Activated CD8-positive, alpha-beta T cell treated with anti-CD3 and anti-CD28 coated beads, Interleukin-2, amount 10 ng/mL, durations not matched to agents 7 days and 5 days (primary cell): ENCODE measurements at regions of chr19 and their contacts with region 1.

Region 1: DNA sequence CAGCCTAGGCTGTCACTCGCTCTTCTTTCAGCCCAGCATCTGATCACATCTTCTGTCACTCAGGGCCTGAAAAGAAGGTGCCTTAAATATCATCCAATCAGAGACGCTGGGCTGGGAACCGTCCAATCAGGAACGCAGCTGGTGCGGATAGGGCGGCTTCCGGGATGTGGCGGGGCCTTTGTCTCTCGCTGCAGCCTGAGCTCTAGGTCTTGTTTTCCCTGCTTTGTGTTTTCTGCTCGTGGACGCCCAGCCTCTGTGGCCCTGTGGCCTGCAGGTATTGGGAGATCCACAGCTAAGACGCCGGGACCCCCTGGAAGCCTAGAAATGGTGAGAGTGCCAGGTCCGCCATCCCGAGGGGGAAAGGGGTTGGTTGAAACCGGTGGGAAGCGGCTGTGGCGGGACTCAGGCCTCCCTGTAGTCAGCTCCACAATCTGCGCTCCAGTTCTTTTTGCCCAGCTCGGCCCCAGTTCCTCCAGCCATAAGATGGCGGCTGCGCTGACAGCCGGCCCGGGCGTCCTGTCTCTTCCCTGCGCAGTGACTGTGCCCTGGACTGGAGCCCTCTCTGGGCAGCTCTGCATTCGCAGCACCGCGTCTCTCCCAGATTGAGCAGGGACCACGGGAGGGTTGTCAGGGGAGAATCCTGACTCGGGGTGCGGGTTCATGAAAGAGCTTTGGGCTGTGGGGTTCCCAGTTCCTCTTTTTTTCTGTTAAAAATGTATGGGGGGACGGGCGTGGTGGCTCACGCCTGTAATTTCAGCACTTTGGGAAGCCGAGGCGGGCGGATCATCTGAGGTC is at the start of gene ZNF85:
- DNase-seq: peak; percentile 96
- ATAC-seq: peak; percentile 100
- H3K4me3 Mint-ChIP-seq: peak within 1 kb of the TSS; percentile 98
- H3K27ac Mint-ChIP-seq: peak within 1 kb of the TSS; percentile 99
- H3K4me1 Mint-ChIP-seq: peaks cover 32% of the 10 kb centered on the region
- H3K27me3 Mint-ChIP-seq: no peaks in the 10 kb centered on the region
- total RNA-seq, gene ZNF85: 24.6 to 24.7 TPM

Region 2: DNA sequence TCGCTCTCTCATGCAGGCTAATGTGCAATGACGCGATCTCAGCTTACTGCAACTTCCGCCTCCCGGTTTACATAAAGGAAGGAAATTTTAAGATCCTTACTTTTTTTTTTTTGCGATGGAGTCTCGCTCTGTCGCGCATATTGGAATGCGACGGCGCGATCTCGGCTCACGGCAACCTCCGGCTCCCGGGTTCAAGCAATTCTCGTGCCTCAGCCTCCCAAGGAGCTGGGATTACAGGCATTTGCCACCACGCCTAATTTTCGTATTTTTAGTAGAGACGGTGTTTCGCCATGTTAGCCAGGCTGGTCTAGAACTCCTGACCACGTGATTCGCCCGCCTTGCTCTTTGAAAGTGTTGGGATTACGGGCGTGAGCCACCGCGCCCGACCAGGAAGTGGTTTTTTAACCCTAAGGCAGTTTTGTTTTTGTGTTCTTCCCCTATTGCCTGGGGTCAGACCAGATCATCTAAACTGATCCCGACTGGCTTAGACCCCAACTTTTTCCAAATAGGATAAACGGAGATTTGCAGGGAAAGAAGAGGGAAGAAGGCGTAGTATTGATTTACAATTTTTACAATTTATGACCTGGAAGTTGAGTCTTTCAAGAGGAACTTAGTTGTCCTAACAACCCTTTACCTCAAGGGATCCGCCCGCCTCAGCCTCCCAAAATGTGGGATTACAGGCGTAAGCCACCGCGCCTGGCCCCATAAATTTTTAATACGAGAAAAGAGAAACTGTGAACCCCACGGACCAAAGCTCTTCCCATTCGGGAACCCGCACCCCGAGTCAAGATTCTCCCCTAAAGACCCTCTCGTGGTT is 499.7 kb before region 1 on chr19:
- CTCF ChIA-PET with region 1: no interaction called
- POLR2A ChIA-PET with region 1: interaction called, 13 read pairs
- DNase-seq: peak; percentile 54
- ATAC-seq: no peak
- H3K4me3 Mint-ChIP-seq: peak overlapping the region; percentile 96
- H3K27ac Mint-ChIP-seq: peak overlapping the region; percentile 98
- H3K4me1 Mint-ChIP-seq: peaks cover 15% of the 10 kb centered on the region
- H3K27me3 Mint-ChIP-seq: no peaks in the 10 kb centered on the region

Region 3: DNA sequence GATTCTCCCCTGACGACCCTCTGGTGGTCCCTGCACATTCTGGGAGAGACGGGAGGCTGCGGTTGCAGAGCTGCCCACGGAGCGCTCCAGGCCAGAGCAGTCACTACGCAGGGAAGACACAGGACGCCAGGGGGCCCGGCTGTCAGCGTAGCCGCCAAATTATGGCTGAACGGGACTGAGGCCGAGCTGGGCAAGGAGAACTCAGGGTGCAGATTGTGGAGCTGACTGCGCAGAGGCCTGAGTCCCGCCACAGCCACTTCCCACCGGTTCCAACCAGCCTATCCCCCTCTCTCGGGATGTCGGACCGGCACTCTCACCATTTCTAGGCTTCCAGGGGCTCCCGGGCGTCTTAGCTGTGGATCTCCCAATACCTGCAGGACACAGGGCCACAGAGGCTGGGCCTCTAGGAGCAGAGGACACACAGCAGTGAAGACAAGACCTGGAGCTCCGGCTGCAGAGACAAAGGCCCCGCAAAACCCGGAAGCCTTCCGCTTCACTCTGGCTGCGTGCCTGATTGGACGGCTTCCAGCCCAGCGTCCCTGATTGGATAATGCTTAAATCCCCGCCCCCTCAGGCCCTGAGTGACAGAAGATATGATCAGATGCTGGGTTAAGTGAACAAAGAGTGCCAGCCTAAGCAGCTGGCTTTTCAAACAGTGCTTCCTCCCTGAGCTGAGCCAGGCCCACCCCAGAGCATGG is 357.8 kb before region 1 on chr19 and contains the start of gene ZNF737:
- CTCF ChIA-PET with region 1: no interaction called
- POLR2A ChIA-PET with region 1: interaction called, 15 read pairs
- DNase-seq: peak; percentile 96
- ATAC-seq: peak; percentile 99
- H3K4me3 Mint-ChIP-seq: peak within 1 kb of the TSS; percentile 99
- H3K27ac Mint-ChIP-seq: peak within 1 kb of the TSS; percentile 99
- H3K4me1 Mint-ChIP-seq: peaks cover 7% of the 10 kb centered on the region
- H3K27me3 Mint-ChIP-seq: no peaks in the 10 kb centered on the region
- total RNA-seq, gene ZNF737: 18.4 to 19.1 TPM

Region 4: DNA sequence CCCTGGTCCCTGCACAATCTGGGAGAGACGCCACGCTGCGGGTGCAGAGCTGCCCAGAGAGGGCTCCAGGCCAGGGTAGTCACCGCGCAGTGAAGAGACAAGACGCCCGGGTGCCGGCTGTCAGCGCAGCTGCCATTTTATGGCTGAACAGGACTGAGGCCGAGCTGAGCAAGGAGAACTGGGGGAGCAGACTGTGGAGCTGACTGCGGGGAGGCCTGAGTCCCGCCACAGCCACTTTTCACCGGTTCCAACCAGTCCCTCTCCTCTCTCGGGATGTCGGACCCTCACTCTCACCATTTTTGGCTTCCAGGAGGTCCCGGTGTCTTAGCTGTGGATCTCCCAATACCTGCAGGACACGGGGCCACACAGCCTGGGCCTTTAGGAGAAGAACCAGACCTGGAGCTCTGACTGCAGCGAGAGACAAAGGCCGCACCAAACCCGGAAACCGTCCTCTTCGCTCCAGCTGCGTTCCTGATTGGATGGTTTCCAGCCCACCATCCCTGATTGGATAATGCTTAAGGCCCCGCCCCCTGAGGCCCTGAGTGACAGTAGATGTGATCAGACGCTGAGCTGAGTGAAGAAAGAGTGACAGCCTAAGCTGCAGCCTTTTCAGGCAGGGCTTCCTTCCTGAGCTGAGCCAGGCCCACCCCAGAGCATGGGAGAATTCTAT is 262.0 kb before region 1 on chr19 and contains the start of gene ZNF626:
- CTCF ChIA-PET with region 1: no interaction called
- POLR2A ChIA-PET with region 1: interaction called, 13 read pairs
- DNase-seq: peak; percentile 95
- ATAC-seq: peak; percentile 99
- H3K4me3 Mint-ChIP-seq: peak within 1 kb of the TSS; percentile 91
- H3K27ac Mint-ChIP-seq: peak within 1 kb of the TSS; percentile 93
- H3K4me1 Mint-ChIP-seq: peaks cover 18% of the 10 kb centered on the region
- H3K27me3 Mint-ChIP-seq: no peaks in the 10 kb centered on the region
- total RNA-seq, gene ZNF626: 7.0 to 9.1 TPM

Region 5: GRCh38 chr19:20912973-20913372 is 10.3 kb before region 1 on chr19:
- CTCF ChIA-PET with region 1: no interaction called
- POLR2A ChIA-PET with region 1: no interaction called
- DNase-seq: no peak
- ATAC-seq: no peak
- H3K4me3 Mint-ChIP-seq: no peak overlapping the region
- H3K27ac Mint-ChIP-seq: no peak overlapping the region
- H3K4me1 Mint-ChIP-seq: no peaks in the 10 kb centered on the region
- H3K27me3 Mint-ChIP-seq: no peaks in the 10 kb centered on the region

Region 6: DNA sequence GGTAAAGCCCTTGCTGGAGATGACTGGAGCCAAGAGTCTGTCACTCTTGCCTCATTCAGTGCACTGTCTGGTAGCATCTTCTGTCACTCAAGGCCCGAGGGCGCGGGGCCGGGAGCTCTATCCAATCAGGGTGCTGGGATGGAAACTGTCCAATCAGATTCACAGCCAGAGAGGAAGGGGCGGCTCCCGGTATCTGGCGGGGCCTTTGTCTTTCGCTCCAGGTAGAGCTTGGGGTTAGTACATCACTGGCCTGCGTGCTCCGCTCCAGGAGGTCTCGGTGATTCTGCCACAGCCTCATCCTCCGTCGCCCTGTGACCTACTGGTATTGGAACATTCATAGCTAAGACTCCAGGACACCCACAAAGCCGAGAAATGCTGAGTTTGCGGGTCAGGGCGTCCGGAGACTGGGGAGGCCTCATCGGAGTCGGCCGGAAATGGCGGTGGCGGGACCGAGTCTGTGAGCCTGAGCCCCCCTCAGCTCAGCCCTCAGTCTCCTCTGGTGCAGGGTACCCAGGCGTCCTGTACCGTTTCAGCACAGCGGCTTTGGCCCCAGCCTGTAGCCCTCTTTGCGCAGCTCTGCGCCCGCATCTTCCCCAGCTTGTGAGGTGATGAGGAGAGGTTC is 76.6 kb after region 1 on chr19:
- CTCF ChIA-PET with region 1: no interaction called
- POLR2A ChIA-PET with region 1: interaction called, 24 read pairs
- DNase-seq: peak; percentile 94
- ATAC-seq: peak; percentile 100
- H3K4me3 Mint-ChIP-seq: peak overlapping the region; percentile 95
- H3K27ac Mint-ChIP-seq: peak overlapping the region; percentile 96
- H3K4me1 Mint-ChIP-seq: peaks cover 27% of the 10 kb centered on the region
- H3K27me3 Mint-ChIP-seq: no peaks in the 10 kb centered on the region

Region 7: GRCh38 chr19:21020298-21021227 is 97.3 kb after region 1 on chr19 and contains the start of gene ZNF430:
- CTCF ChIA-PET with region 1: interaction called, 5 read pairs
- POLR2A ChIA-PET with region 1: interaction called, 18 read pairs
- DNase-seq: peak; percentile 98
- ATAC-seq: peak; percentile 96
- H3K4me3 Mint-ChIP-seq: peak within 1 kb of the TSS; percentile 99
- H3K27ac Mint-ChIP-seq: peak within 1 kb of the TSS; percentile 99
- H3K4me1 Mint-ChIP-seq: peaks cover 35% of the 10 kb centered on the region
- H3K27me3 Mint-ChIP-seq: no peaks in the 10 kb centered on the region
- total RNA-seq, gene ZNF430: 22.0 to 25.5 TPM

Region 8: GRCh38 chr19:21141787-21142464 is 218.7 kb after region 1 on chr19 and contains the start of gene ZNF431:
- CTCF ChIA-PET with region 1: no interaction called
- POLR2A ChIA-PET with region 1: interaction called, 11 read pairs
- DNase-seq: peak; percentile 95
- ATAC-seq: peak; percentile 99
- H3K4me3 Mint-ChIP-seq: peak within 1 kb of the TSS; percentile 98
- H3K27ac Mint-ChIP-seq: peak within 1 kb of the TSS; percentile 97
- H3K4me1 Mint-ChIP-seq: peaks cover 24% of the 10 kb centered on the region
- H3K27me3 Mint-ChIP-seq: no peaks in the 10 kb centered on the region
- total RNA-seq, gene ZNF431: 22.6 to 23.9 TPM